Ascending aorta (tissue), 2 donors: ENCODE measurements at regions of chr15 and their contacts with region 1.

Region 1: DNA sequence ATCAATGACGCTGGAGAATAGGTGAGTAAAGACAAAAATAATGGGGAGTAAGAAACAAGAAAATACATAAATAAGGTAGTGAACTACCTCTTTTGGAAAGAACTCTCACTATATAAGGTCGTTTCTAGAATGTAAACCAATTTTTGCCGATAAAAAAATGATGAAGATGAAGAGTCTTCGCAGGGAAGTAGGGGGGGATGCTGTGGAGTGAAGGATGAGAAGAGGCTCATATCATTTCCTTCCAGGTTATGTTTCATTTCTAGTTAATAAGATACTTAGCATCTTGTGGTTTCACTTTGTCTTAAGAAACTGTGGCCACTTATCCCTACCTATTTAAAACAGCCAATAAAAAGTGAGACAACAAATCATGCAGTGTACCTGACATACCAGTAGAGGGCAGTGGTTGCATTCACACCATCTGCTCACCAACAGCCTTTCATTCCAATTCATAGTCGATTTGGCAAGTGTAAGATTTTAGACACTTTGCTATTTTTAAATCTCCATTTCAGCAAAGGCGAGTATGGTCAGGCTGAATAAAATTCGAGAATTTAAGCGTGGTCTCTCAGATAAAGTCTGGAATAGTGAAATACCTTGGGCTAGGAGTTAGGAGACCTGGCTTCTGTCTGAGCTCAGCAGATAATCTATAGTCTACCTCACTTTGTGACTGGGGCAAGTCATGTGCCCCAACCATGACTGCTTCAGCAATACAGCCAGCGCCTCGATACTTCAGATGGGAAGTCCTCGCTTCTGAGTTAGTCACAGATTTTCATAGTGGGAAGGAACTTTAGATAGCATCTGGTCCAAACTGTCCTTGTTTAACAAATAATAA is 28.9 kb upstream of the ICE2 start:
- DNase-seq: peak in 1 of 2 donors; percentile 67
- H3K4me3 ChIP-seq: no peak overlapping the region
- H3K27ac ChIP-seq: peak overlapping the region in 1 of 2 donors; percentile 30
- H3K4me1 ChIP-seq: peaks cover 0 to 4% of the 10 kb centered on the region in 2 donors
- H3K27me3 ChIP-seq: no peaks in the 10 kb centered on the region
- CTCF ChIP-seq: peak; percentile 82 to 88 (median 88)

Region 2: GRCh38 chr15:61834076-61834697 is 1326.4 kb after region 1 on chr15:
- intact Hi-C with region 1: loop called (anchors 2 kb)
- DNase-seq: peak in 1 of 2 donors; percentile 90
- H3K4me3 ChIP-seq: no peak overlapping the region
- H3K27ac ChIP-seq: no peak overlapping the region
- H3K4me1 ChIP-seq: no peaks in the 10 kb centered on the region
- H3K27me3 ChIP-seq: no peaks in the 10 kb centered on the region
- CTCF ChIP-seq: peak; percentile 73 to 98 (median 94)